ENCODE measurements at regions of chr17 and their contacts with region 1.

Region 1: DNA sequence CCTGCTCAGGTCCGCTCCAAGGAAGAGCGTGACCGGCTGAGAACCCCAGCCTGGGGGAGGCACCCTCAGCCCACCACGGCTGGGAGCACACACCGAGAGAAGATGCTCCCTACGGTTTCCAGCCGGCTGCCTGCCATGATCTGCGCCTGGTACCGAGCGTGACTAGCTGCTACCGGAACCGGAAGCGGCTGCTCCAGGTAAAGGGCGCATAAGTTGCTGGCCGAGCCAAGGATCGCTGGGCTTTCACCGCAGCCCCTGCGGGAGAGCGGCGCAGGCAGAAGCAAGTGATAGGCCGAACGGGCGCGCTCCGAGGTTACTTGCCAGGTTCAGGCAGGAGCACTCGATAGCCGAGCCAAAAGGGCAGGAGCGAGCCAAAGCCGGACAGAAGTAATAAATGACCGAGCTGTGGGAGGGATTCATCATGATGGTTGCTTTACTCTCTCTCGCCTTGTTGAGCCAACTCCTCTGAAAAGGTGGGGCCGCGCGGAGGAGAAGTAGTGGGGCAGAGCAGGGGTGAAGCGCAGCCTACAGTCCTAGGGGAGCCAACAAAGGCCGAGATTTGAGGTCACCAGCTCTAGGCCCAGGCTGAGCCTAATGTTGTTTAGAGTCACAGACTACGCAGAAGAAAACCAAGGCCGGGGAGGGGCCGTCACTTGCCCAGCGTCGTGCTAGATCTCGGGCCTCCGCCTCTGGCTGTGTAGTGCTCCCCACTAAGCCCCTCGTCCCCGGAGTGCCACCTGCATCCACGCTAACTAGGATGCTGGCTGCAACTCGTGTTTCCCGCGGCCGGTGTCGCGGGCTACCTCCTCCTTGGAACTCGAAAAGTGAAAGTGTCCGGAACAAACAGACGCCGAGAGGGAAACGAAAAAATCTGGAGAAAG is at the start of gene MRPS23:
- DNase-seq: peak; percentile 91 to 99 (median 95)
- ATAC-seq: peak; percentile 94
- H3K4me3 ChIP-seq: peak within 1 kb of the TSS; percentile 74 to 82
- H3K4me3 Mint-ChIP-seq: peak within 1 kb of the TSS; percentile 95
- H3K27ac ChIP-seq: peak within 1 kb of the TSS; percentile 88 to 91
- H3K27ac Mint-ChIP-seq: peak within 1 kb of the TSS; percentile 100
- H3K4me1 ChIP-seq: peaks cover 32% of the 10 kb centered on the region
- H3K4me1 Mint-ChIP-seq: peaks cover 44% of the 10 kb centered on the region
- H3K27me3 ChIP-seq: no peaks in the 10 kb centered on the region
- H3K27me3 Mint-ChIP-seq: no peaks in the 10 kb centered on the region
- CTCF ChIP-seq: no peak
- total RNA-seq, gene MRPS23: 16.2 to 17.2 TPM

Region 2: GRCh38 chr17:57440522-57441485 is 409.3 kb before region 1 on chr17:
- CTCF ChIA-PET with region 1: no interaction called
- POLR2A ChIA-PET with region 1: no interaction called
- intact Hi-C with region 1: loop called in 1 of 2 experiments (anchors 5 kb)
- DNase-seq: peak; percentile 31 to 89 (median 63)
- ATAC-seq: peak; percentile 82
- H3K4me3 ChIP-seq: peak overlapping the region in 1 of 2 experiments; percentile 14
- H3K4me3 Mint-ChIP-seq: peak overlapping the region; percentile 8
- H3K27ac ChIP-seq: peak overlapping the region in 1 of 2 experiments; percentile 37
- H3K27ac Mint-ChIP-seq: peak overlapping the region; percentile 94
- H3K4me1 ChIP-seq: peaks cover 41% of the 10 kb centered on the region
- H3K4me1 Mint-ChIP-seq: peaks cover 72% of the 10 kb centered on the region
- H3K27me3 ChIP-seq: no peaks in the 10 kb centered on the region
- H3K27me3 Mint-ChIP-seq: no peaks in the 10 kb centered on the region
- CTCF ChIP-seq: peak; percentile 20

Region 3: DNA sequence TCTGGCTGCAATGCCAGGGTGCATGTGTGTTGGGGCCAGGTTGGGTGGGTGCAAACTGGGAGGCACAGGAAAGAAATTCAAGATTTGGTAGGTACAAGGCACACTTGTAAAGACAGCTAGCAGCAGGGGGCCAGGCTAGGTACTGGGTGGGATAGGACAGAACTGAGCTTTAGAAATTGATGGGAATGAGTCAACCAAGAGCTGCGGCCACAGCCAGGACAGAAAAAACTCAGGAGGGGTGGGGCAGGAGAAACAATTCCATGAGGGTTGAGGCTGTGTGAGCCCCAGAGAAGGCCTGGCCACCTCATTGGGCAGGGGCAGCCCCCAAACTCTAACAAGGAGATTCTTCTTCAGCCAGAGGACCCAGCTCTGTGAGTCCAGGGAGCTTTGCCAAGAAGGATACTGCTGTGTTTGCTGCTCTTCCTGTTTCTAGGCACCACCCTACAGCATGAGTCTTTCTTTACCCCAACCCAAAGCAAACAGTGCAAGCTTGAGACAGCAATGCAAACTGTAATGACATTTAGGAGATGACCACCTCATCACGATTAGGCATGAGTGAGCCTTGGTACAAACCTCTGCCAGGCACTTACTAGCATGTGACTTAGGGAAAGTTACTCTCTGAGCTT is 83.7 kb before region 1 on chr17:
- CTCF ChIA-PET with region 1: no interaction called
- POLR2A ChIA-PET with region 1: no interaction called
- intact Hi-C with region 1: no loop called
- DNase-seq: no peak
- ATAC-seq: no peak
- H3K4me3 ChIP-seq: no peak overlapping the region
- H3K4me3 Mint-ChIP-seq: no peak overlapping the region
- H3K27ac ChIP-seq: no peak overlapping the region
- H3K27ac Mint-ChIP-seq: no peak overlapping the region
- H3K4me1 ChIP-seq: no peaks in the 10 kb centered on the region
- H3K4me1 Mint-ChIP-seq: no peaks in the 10 kb centered on the region
- H3K27me3 ChIP-seq: peaks cover 0 to 2% of the 10 kb centered on the region in 2 experiments
- H3K27me3 Mint-ChIP-seq: peaks cover 10% of the 10 kb centered on the region
- CTCF ChIP-seq: no peak

Region 4: GRCh38 chr17:57861000-57861789 is 11.1 kb after region 1 on chr17:
- CTCF ChIA-PET with region 1: interaction called, 59 read pairs
- POLR2A ChIA-PET with region 1: interaction called, 20 read pairs
- intact Hi-C with region 1: no loop called
- DNase-seq: peak in 8 of 9 experiments; percentile 19 to 68 (median 41)
- ATAC-seq: peak; percentile 70
- H3K4me3 ChIP-seq: peak overlapping the region; percentile 34
- H3K4me3 Mint-ChIP-seq: peak overlapping the region; percentile 83
- H3K27ac ChIP-seq: no peak overlapping the region
- H3K27ac Mint-ChIP-seq: peak overlapping the region; percentile 41
- H3K4me1 ChIP-seq: peaks cover 11% of the 10 kb centered on the region
- H3K4me1 Mint-ChIP-seq: peaks cover 14% of the 10 kb centered on the region
- H3K27me3 ChIP-seq: peaks cover 0 to 7% of the 10 kb centered on the region in 2 experiments
- H3K27me3 Mint-ChIP-seq: peaks cover 10% of the 10 kb centered on the region
- CTCF ChIP-seq: no peak

Region 5: DNA sequence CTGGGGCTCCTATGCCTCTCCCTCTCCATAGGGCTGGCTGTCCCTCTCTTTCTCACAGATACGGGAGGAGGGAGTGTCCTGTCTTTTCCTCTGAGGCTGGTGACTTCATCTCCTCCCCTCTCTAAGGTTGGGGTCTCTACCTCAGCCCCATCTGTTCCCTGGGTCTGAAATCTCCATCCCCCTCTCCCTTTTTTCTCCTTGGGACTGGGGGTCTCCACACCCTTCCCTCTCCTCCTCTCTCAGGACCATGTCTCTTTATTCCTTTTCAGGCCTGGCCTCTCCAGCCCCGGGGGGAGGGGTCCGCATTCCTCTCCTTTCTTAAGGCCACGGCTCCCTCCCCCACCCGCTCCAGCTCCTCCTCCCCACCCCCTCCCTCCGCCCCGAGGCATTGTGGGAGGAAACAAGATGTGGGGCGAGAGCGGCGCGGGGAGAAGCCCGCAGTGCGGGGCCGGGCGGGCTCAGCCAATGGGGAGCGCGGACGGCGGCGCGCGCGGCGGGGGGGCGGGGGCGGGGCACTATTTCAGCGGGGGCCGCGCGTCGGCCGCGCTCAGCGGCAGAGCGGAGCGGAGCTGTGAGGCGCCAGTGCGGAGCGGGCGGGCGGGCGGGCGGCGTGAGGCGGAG is 232.9 kb after region 1 on chr17 and contains the start of gene DYNLL2:
- CTCF ChIA-PET with region 1: no interaction called
- POLR2A ChIA-PET with region 1: interaction called, 10 read pairs
- intact Hi-C with region 1: loop called (anchors 1 kb)
- DNase-seq: peak; percentile 76 to 93 (median 88)
- ATAC-seq: peak; percentile 69
- H3K4me3 ChIP-seq: peak within 1 kb of the TSS; percentile 60 to 62
- H3K4me3 Mint-ChIP-seq: peak within 1 kb of the TSS; percentile 89
- H3K27ac ChIP-seq: peak within 1 kb of the TSS; percentile 81 to 85
- H3K27ac Mint-ChIP-seq: peak within 1 kb of the TSS; percentile 88
- H3K4me1 ChIP-seq: peaks cover 33% of the 10 kb centered on the region
- H3K4me1 Mint-ChIP-seq: peaks cover 33% of the 10 kb centered on the region
- H3K27me3 ChIP-seq: no peaks in the 10 kb centered on the region
- H3K27me3 Mint-ChIP-seq: no peaks in the 10 kb centered on the region
- CTCF ChIP-seq: no peak
- total RNA-seq, gene DYNLL2: 30.5 to 30.6 TPM

Region 6: DNA sequence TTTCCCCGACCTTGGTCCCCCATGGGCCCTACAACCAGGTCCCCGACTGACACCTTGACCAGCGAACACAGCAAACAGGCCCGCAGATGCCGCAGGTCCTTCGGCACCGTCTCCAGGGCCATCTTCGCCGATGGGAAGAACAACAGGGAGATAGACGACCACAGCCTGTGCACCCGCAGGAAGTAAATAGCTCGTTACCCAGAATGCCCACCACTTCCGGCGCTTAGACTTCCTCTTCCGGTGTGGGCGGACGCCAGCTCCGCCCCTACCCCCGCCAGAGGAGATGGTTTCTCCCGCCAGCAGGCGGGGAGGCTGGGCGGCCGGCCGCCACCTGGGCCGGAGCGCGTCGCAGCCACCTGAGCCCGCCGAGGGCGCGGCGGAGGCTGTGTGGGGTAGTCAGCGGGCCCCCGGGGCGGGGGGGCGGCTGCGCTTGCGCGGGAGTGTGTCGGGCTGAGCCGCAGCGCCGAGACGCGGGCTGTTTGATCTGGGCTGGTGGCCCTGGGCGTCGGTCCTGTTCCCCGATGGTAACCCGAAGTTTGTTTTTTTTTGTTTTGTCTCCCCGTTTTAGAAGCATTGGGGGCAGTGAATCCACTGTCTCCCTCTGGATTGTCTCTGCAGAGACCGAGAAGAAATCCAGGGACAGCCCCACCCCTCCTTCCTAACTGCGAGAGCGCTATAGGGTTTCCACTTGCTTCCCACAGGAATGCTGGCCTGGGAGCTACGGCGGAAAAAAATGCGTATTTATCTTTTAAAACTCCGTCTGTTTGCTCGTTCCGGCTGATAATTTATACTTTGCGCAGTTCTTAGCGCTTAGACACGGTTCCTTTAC is 502.1 kb after region 1 on chr17 and contains the start of gene SUPT4H1:
- CTCF ChIA-PET with region 1: no interaction called
- POLR2A ChIA-PET with region 1: no interaction called
- intact Hi-C with region 1: loop called in 1 of 2 experiments (anchors 5 kb)
- DNase-seq: peak; percentile 81 to 97 (median 91)
- ATAC-seq: peak; percentile 88
- H3K4me3 ChIP-seq: peak within 1 kb of the TSS; percentile 69 to 70
- H3K4me3 Mint-ChIP-seq: peak within 1 kb of the TSS; percentile 100
- H3K27ac ChIP-seq: peak within 1 kb of the TSS; percentile 75 to 81
- H3K27ac Mint-ChIP-seq: peak within 1 kb of the TSS; percentile 100
- H3K4me1 ChIP-seq: peaks cover 46% of the 10 kb centered on the region
- H3K4me1 Mint-ChIP-seq: peaks cover 60% of the 10 kb centered on the region
- H3K27me3 ChIP-seq: no peaks in the 10 kb centered on the region
- H3K27me3 Mint-ChIP-seq: no peaks in the 10 kb centered on the region
- CTCF ChIP-seq: no peak
- total RNA-seq, gene SUPT4H1: 45.2 to 59.7 TPM

Measured in CD8-positive, alpha-beta T cell (primary cell).